OCI-LY7 (cell line): ENCODE measurements at regions of chr10 and their contacts with region 1.

Region 1: GRCh38 chr10:76185471-76186301 is 754.3 kb downstream of the LRMDA start:
- DNase-seq: no peak
- H3K4me3 ChIP-seq: no peak overlapping the region
- H3K27ac ChIP-seq: no peak overlapping the region
- H3K4me1 ChIP-seq: no peaks in the 10 kb centered on the region
- CTCF ChIP-seq: no peak

Region 2: DNA sequence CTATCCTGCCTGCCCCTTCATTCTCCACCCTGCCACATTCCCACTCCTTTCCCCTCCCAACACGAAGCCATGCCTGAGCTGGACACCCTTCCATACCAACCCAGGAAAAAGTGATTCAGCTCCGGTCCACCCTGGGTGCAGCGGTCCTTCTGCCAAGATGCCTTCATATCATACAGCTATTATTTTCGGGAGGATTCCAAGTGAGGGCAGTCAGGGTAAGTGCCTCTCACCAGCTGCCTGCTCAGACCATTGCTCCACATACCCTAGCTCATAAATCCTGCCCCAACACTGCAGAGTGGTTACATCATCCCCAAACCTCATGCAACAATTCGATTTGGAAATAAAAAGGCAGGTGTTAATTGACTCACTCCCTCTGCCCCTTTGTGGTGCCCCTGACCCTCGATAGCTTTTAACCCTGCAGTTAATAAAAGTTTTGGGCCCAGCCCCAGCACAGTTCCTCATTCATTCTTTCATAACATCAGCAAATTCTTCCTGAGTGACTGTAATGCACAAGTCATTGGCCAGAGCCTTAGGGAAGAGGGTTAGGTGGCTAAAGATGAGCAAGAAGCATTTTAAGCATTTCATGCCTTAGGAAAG is 826.8 kb before region 1 on chr10:
- CTCF ChIA-PET with region 1: no interaction called
- POLR2A ChIA-PET with region 1: interaction called, 10 read pairs
- intact Hi-C with region 1: no loop called
- DNase-seq: no peak
- H3K4me3 ChIP-seq: no peak overlapping the region
- H3K27ac ChIP-seq: no peak overlapping the region
- H3K4me1 ChIP-seq: no peaks in the 10 kb centered on the region
- CTCF ChIP-seq: no peak